Activated naive CD4-positive, alpha-beta T cell treated with anti-CD3 and anti-CD28 coated beads for 36 hours (primary cell): ENCODE measurements at regions of chr1 and their contacts with region 1.

Region 1: DNA sequence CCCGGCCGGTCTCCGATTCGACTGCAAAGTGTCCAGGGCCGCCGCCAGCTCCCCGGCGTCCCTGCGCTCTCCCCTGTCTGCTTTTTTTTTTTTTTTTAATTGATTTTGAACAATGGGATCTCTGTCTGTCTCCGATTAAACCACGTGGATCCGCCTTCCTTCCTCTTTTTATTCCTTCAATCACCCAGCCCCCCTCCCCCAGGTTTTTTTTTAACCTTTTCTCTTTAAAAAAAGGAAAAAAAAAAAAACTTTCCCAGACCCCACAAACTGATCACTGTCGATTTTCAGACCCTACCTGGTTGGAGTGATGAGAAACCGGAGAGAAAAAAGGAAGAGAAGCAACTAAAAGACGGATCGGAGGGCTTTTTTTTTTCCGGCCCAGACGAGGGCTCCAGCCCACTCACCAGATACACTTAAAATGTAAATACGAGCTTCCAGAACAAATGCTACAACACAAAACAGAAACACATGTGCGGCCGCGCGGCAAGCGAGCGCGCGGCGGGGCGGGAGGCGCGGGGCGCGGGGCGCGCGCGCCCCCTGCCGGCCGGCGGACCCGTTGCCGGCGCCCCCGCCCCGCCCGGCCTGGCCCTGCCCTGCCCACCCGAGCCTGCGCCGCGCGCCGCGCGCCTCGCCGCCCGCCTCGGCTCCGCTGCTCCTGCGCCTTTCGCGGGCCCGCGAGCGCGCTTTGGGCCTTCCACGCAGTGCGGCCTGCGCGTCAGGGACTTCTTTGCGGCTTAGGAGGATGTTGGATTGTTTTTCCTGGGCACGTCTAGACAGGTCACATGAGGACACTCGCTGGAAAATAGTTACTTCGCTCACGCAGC is at the start of gene RCC2:
- DNase-seq: peak; percentile 67
- H3K4me3 Mint-ChIP-seq: peak within 1 kb of the TSS; percentile 94
- H3K27ac Mint-ChIP-seq: peak within 1 kb of the TSS; percentile 97
- H3K4me1 Mint-ChIP-seq: peaks cover 44% of the 10 kb centered on the region
- H3K27me3 Mint-ChIP-seq: no peaks in the 10 kb centered on the region
- total RNA-seq, gene RCC2: 130 to 132 TPM

Region 2: DNA sequence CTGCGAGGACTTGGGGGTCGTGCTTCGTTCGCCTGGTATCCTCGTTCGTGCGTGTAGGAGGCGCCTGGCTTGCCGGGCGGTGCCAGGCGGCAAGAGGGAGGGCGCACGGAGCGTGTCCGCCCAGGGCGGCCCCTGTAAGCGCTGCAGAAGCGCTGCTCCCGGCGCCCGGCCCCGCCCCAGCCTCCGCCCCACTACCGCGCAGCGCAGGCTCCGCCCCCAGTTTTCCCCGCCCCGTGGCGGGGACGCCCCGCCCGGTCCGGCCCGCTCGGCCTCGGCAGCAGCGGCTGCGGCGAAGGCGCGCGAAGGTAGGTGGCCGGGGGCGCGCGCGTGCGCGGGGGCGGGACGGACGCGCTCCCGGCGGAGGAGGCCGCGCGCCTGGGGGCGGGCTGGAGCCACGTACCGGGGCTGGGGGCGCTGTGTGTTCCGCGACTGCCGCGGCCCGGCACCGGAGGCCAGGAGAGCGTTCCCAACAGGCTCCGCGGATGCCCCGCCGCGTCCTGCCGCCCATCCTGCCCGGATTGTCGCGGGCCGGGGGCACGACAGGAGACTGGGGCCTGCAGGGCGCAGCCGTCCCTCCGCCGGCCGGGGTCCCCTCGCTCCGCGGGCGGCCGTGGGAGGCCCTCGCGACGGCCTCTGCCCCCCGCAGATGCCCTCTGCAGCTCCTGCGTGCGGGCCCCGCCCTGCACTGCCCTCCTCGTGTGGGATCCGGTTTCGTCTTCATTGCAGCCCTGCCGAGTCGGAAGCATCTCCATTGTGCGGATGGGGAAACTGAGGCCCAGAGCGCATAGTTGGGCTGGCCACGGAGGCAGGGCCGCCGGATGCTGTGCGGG is 525.4 kb before region 1 on chr1:
- CTCF ChIA-PET with region 1: no interaction called
- intact Hi-C with region 1: loop called (anchors 5 kb)
- DNase-seq: peak; percentile 92
- H3K4me3 Mint-ChIP-seq: peak overlapping the region; percentile 88
- H3K27ac Mint-ChIP-seq: peak overlapping the region; percentile 77
- H3K4me1 Mint-ChIP-seq: peaks cover 30% of the 10 kb centered on the region
- H3K27me3 Mint-ChIP-seq: no peaks in the 10 kb centered on the region

Region 3: GRCh38 chr1:17053685-17054410 is 385.6 kb before region 1 on chr1 and contains the start of gene SDHB:
- CTCF ChIA-PET with region 1: interaction called, 3 read pairs
- intact Hi-C with region 1: loop called (anchors 2 kb)
- DNase-seq: peak; percentile 100
- H3K4me3 Mint-ChIP-seq: peak within 1 kb of the TSS; percentile 98
- H3K27ac Mint-ChIP-seq: peak within 1 kb of the TSS; percentile 91
- H3K4me1 Mint-ChIP-seq: peaks cover 22% of the 10 kb centered on the region
- H3K27me3 Mint-ChIP-seq: peaks cover 5% of the 10 kb centered on the region
- total RNA-seq, gene SDHB: 177 to 179 TPM

Region 4: DNA sequence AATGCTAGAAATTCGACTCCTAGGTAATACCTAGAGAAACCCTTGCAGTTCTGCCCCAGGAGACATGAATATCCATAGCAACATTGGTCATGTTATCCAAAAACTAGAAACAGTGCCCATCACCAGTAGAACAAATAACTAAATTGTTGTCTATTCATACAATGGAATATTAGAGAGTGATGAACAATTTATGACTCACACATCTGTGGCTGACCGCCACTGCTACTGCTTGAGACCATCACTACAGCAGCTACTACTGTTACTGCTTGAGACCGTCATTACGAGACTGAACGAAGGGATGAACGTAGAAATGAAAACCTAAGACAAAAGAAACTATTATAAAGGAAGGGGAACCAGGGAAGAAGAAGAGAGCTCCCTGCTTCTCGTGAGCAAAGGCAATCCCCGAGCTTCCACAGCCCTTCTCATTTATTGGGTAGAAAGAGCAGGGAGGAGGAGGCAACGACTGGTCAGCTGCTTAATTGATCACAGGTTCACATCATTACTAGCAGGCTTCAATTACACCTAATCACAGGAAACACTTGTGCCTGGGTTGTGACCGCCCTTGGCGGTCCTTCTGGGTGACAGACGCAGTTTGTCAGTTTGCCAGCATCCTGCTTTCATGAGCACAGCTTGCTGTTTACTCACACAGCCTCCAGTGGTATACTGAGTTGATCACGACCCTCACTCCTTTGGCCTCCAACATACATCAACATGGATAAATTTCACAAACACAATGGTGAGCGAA is 145.6 kb before region 1 on chr1:
- CTCF ChIA-PET with region 1: no interaction called
- intact Hi-C with region 1: no loop called
- DNase-seq: no peak
- H3K4me3 Mint-ChIP-seq: no peak overlapping the region
- H3K27ac Mint-ChIP-seq: no peak overlapping the region
- H3K4me1 Mint-ChIP-seq: no peaks in the 10 kb centered on the region
- H3K27me3 Mint-ChIP-seq: peaks cover 9% of the 10 kb centered on the region

Region 5: GRCh38 chr1:17419626-17420328 is 19.7 kb before region 1 on chr1:
- CTCF ChIA-PET with region 1: interaction called, 6 read pairs
- intact Hi-C with region 1: loop called (anchors 2 kb)
- DNase-seq: peak; percentile 66
- H3K4me3 Mint-ChIP-seq: no peak overlapping the region
- H3K27ac Mint-ChIP-seq: no peak overlapping the region
- H3K4me1 Mint-ChIP-seq: peaks cover 9% of the 10 kb centered on the region
- H3K27me3 Mint-ChIP-seq: no peaks in the 10 kb centered on the region

Region 6: GRCh38 chr1:18956369-18957135 is 1517.1 kb after region 1 on chr1 and contains the start of gene IFFO2:
- CTCF ChIA-PET with region 1: no interaction called
- intact Hi-C with region 1: loop called (anchors 5 kb)
- DNase-seq: peak; percentile 98
- H3K4me3 Mint-ChIP-seq: peak within 1 kb of the TSS; percentile 91
- H3K27ac Mint-ChIP-seq: peak within 1 kb of the TSS; percentile 47
- H3K4me1 Mint-ChIP-seq: peaks cover 48% of the 10 kb centered on the region
- H3K27me3 Mint-ChIP-seq: no peaks in the 10 kb centered on the region
- total RNA-seq, gene IFFO2: 24.9 to 27.0 TPM